WTC11 (cell line): ENCODE measurements at regions of chr22 and their contacts with region 1.

Region 1: GRCh38 chr22:41697126-41697775 is 2.1 kb upstream of the MEI1 start:
- DNase-seq: peak; percentile 98
- ATAC-seq: peak; percentile 87
- H3K4me3 Mint-ChIP-seq: peak overlapping the region; percentile 52
- H3K27ac Mint-ChIP-seq: no peak overlapping the region
- H3K4me1 Mint-ChIP-seq: peaks cover 10% of the 10 kb centered on the region
- H3K27me3 Mint-ChIP-seq: peaks cover 28% of the 10 kb centered on the region
- CTCF ChIP-seq: peak; percentile 99

Region 2: GRCh38 chr22:41411021-41411851 is 286.0 kb before region 1 on chr22:
- CTCF ChIA-PET with region 1: no interaction called
- POLR2A ChIA-PET with region 1: no interaction called
- DNase-seq: no peak
- ATAC-seq: peak; percentile 21
- H3K4me3 Mint-ChIP-seq: no peak overlapping the region
- H3K27ac Mint-ChIP-seq: peak overlapping the region; percentile 50
- H3K4me1 Mint-ChIP-seq: peaks cover 22% of the 10 kb centered on the region
- H3K27me3 Mint-ChIP-seq: no peaks in the 10 kb centered on the region
- CTCF ChIP-seq: no peak

Region 3: DNA sequence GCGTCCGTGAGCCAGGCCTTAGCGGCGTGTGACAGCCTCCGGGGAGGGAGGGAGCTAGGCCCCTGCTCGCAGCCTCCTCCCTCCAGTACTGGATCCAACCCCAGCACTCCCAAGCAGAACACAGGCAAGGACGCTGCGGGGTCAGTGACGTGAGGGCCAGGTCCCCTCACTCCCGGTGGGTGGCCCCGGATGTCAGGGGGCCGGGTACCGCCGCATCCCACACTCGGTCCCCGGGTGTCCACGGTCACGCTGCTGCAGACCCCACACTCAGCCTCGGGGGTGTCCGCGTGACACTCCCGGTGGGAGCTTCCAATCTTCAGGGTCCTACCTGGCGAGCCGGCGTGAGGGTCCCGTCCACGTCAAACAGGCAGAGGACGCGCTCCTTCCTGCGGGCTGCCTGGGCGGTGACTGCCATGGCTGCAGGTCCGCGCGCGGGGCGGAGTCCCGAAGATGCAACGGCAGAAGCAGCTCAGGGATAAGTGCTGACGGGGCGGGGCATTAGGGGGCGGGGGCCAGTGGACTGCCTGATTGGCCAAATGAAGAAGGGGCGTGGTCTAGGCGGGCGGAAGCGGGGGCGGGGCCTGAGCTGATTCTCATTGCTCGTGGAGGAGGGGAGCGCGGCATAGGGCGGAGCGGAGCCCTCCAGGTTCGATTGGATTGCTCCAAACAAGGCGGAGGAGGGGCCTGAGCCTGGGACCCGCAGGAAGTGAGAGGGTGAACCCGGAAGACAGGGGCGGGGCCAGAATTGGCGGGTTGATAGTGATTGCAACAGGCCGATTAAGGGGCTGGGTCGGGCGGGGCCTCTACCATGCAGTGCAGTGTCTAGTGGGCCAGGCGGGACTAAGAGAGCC is 107.6 kb before region 1 on chr22 and contains the start of gene PMM1:
- CTCF ChIA-PET with region 1: interaction called, 10 read pairs
- POLR2A ChIA-PET with region 1: interaction called, 6 read pairs
- DNase-seq: peak; percentile 100
- ATAC-seq: peak; percentile 99
- H3K4me3 Mint-ChIP-seq: peak within 1 kb of the TSS; percentile 89
- H3K27ac Mint-ChIP-seq: peak within 1 kb of the TSS; percentile 76
- H3K4me1 Mint-ChIP-seq: peaks cover 6% of the 10 kb centered on the region
- H3K27me3 Mint-ChIP-seq: peaks cover 10% of the 10 kb centered on the region; the same call in 1 of the 2 replicates
- CTCF ChIP-seq: no peak
- total RNA-seq, gene PMM1: 14.8 to 15.7 TPM (median 15.0 TPM) in 3 replicates

Region 4: DNA sequence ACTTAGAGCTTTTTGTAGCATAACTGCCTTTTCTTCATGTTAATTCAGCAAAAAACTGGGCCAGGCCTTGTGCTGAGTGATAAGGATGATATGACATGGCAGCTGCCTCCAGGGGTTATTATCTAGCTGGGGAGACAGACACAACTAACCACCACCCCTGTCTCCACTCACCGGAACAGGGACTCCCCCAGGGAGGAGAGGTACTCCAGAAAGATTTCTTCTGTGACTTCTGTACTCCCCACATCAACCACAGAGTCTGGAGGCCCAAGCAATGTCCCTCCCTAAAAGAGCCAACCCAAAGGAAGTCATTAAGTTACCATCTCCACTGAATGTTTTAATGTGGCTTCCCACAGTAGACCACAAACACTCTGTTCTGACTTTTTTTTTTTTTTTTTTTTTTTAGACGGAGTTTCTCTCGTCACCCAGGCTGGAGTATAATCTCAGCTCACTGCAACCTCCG is 93.3 kb before region 1 on chr22:
- CTCF ChIA-PET with region 1: no interaction called
- POLR2A ChIA-PET with region 1: no interaction called
- DNase-seq: no peak
- ATAC-seq: no peak
- H3K4me3 Mint-ChIP-seq: no peak overlapping the region
- H3K27ac Mint-ChIP-seq: no peak overlapping the region
- H3K4me1 Mint-ChIP-seq: no peaks in the 10 kb centered on the region
- H3K27me3 Mint-ChIP-seq: no peaks in the 10 kb centered on the region
- CTCF ChIP-seq: no peak

Region 5: DNA sequence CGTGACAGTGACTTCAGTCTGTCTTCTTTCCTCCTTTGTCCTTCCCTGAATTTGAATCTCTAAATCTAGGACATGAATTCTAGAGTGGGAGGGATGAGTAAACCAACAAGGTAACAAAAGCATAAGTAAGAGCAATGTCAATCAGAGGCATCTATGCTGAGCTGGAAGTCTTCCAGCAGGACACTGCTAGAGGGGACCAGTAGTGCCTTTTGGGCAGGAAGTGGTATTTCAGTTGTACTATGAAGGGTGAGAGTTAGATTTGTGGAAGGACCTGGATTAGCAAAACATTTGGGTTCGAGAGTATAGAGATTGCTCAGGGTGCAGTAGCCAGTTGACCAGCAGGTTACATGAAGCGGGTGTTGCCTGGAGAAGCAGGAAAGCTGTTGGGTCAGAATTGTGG is 42.3 kb after region 1 on chr22:
- CTCF ChIA-PET with region 1: interaction called, 37 read pairs
- POLR2A ChIA-PET with region 1: no interaction called
- DNase-seq: no peak
- ATAC-seq: no peak
- H3K4me3 Mint-ChIP-seq: no peak overlapping the region
- H3K27ac Mint-ChIP-seq: no peak overlapping the region
- H3K4me1 Mint-ChIP-seq: peaks cover 5% of the 10 kb centered on the region; the same call in 1 of the 2 replicates
- H3K27me3 Mint-ChIP-seq: 0 out of 2 replicates have a peak, but pooled peaks cover 5% of the 10 kb centered on the region
- CTCF ChIP-seq: no peak

Region 6: DNA sequence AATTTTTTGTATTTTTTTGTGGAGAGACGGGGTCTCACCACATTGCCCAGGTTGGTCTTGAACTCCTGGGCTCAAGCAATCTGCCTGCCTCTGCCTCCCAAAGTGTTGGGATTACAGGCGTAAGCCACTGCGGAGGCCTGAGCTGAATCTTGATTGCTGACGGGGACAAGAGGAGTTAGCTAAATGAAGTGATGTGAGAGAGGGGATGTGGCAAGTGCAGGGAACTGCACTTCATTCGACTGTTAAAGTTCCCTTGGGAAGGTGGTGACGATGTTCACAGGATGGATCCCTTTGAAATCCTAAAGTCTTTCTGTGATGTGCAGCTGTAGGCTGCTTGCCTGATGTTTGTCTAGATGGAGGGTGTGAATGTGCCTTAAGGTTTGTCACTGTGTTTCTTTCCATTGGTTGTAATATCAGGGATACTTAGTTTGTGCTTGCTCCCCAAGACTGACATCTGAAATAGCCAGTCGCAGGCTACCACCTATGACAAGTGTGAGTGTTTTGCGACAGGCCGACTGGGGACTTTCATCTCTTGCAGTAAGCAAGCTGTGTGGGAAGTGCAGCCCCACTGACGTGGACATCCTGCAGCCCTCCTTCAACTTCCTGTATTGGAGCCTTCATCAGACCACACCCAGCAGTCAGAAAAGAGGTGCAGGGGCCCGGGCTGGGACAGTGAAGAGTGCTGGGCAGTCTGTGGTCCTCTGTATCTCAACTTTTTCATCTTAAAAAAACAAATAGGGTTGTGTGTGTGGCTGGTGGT is 83.7 kb after region 1 on chr22:
- CTCF ChIA-PET with region 1: interaction called, 21 read pairs
- POLR2A ChIA-PET with region 1: no interaction called
- DNase-seq: no peak
- ATAC-seq: peak; percentile 41
- H3K4me3 Mint-ChIP-seq: no peak overlapping the region
- H3K27ac Mint-ChIP-seq: no peak overlapping the region
- H3K4me1 Mint-ChIP-seq: peaks cover 8% of the 10 kb centered on the region
- H3K27me3 Mint-ChIP-seq: peaks cover 7% of the 10 kb centered on the region; the same call in 1 of the 2 replicates
- CTCF ChIP-seq: no peak

Region 7: GRCh38 chr22:41822317-41823060 is 125.2 kb after region 1 on chr22:
- CTCF ChIA-PET with region 1: interaction called, 59 read pairs
- POLR2A ChIA-PET with region 1: no interaction called
- DNase-seq: no peak
- ATAC-seq: peak; percentile 54
- H3K4me3 Mint-ChIP-seq: no peak overlapping the region
- H3K27ac Mint-ChIP-seq: peak overlapping the region; percentile 32; the same call in 1 of the 2 replicates
- H3K4me1 Mint-ChIP-seq: peaks cover 35% of the 10 kb centered on the region
- H3K27me3 Mint-ChIP-seq: no peaks in the 10 kb centered on the region; the same call in 1 of the 2 replicates
- CTCF ChIP-seq: no peak

Region 8: GRCh38 chr22:41910050-41911000 is 213.1 kb after region 1 on chr22:
- CTCF ChIA-PET with region 1: interaction called, 22 read pairs
- POLR2A ChIA-PET with region 1: no interaction called
- DNase-seq: peak; percentile 69
- ATAC-seq: peak; percentile 27
- H3K4me3 Mint-ChIP-seq: no peak overlapping the region
- H3K27ac Mint-ChIP-seq: no peak overlapping the region
- H3K4me1 Mint-ChIP-seq: peaks cover 17% of the 10 kb centered on the region
- H3K27me3 Mint-ChIP-seq: peaks cover 57% of the 10 kb centered on the region
- CTCF ChIP-seq: no peak

Region 9: DNA sequence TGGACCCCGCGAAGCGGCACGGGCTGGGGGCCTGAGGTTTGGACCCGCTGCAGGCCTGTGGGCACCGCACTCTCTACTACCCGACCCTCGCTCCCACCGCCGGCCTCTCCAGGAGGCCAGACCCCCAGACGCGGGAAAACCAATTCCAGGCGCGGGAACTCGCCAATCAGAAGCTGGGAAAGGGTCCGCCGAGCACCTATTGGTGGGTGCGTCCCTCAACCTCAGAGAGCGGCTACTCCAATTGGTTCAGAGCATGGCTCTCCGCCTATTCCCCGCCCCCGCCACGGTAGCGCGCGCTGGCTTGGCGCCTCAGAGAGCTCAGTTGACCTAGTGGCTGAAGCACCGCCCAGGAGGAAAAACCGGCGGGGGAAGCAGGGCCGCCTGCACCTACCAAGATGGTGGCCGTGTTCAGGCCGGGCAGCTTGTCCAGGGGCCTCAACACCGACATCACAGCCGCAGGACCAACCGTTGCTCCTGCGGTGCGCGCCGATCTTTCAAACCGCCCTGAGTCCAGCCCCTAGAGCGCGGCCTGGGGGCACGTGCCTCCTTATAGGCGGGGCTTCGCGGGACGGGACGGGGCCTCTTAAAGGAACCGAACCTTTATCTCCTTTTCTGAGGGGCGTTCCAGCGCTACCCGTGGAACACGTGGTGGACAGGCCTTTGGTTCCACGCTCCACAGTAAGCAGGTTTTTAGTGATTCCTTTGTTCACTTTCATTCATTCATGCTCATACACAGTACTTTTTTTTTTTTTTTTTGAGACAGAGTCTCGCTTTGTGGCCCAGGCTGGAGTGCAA is 249.6 kb after region 1 on chr22 and contains the start of gene CENPM:
- CTCF ChIA-PET with region 1: interaction called, 32 read pairs
- POLR2A ChIA-PET with region 1: interaction called, 3 read pairs
- DNase-seq: peak; percentile 95
- ATAC-seq: peak; percentile 93
- H3K4me3 Mint-ChIP-seq: peak within 1 kb of the TSS; percentile 73
- H3K27ac Mint-ChIP-seq: peak within 1 kb of the TSS; percentile 49; the same call in 1 of the 2 replicates
- H3K4me1 Mint-ChIP-seq: peaks cover 46% of the 10 kb centered on the region
- H3K27me3 Mint-ChIP-seq: peaks cover 4% of the 10 kb centered on the region; the same call in 1 of the 2 replicates
- CTCF ChIP-seq: no peak
- total RNA-seq, gene CENPM: 40.3 to 43.7 TPM (median 41.7 TPM) in 3 replicates